GM23248 (cell line): ENCODE measurements at regions of chr10 and their contacts with region 1.

Region 1: GRCh38 chr10:110284262-110284661 is 20.5 kb downstream of the SMNDC1 start:
- DNase-seq: no peak
- H3K4me3 ChIP-seq: no peak overlapping the region
- H3K27ac ChIP-seq: no peak overlapping the region
- H3K4me1 ChIP-seq: no peaks in the 10 kb centered on the region; the same call in 1 of the 2 replicates
- H3K27me3 ChIP-seq: no peaks in the 10 kb centered on the region

Region 2: GRCh38 chr10:110137142-110137545 is 147.1 kb before region 1 on chr10:
- in situ Hi-C with region 1: loop called (anchors 5 kb)
- DNase-seq: peak; percentile 88
- H3K4me3 ChIP-seq: no peak overlapping the region
- H3K27ac ChIP-seq: peak overlapping the region; percentile 49
- H3K4me1 ChIP-seq: peaks cover 23% of the 10 kb centered on the region
- H3K27me3 ChIP-seq: no peaks in the 10 kb centered on the region